ENCODE measurements at regions of chr7 and their contacts with region 1.

Region 1: DNA sequence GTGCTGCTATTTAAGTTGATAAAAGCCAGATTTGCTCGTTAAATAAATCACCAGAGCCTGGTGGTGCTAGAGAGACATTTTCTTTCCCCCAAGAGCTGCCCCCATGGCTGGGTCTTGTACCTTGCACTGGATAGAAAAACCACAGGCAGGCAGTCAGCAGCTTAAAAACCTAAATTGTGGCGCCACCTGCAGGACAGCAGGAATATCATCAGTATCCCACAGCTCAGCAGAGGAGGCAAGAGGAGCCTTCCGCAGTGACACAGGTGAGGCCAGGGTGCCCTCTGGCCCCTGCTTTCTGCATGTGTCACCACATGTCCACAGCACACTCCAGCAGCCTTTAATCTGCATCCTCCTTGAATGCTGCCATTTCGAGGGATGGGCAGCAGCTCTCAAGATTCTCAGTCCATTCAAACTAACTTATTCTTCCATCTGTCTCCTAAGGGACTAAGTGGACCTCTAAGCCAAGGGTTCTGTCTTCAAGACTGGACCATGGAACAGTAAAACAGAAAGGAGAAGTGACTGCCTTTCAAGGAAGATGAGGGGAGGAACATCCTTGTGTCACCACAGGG is 4.5 kb upstream of the PLXNA4 start:
- DNase-seq: no peak
- H3K4me3 ChIP-seq: no peak overlapping the region
- H3K27ac ChIP-seq: no peak overlapping the region
- H3K4me1 ChIP-seq: peaks cover 6 to 18% (median 14%) of the 10 kb centered on the region in 6 donors
- H3K27me3 ChIP-seq: peaks cover 0 to 58% (median 21%) of the 10 kb centered on the region in 7 donors
- CTCF ChIP-seq: peak; percentile 54 to 84 (median 69)
- POLR2A ChIP-seq: no peak

Region 2: DNA sequence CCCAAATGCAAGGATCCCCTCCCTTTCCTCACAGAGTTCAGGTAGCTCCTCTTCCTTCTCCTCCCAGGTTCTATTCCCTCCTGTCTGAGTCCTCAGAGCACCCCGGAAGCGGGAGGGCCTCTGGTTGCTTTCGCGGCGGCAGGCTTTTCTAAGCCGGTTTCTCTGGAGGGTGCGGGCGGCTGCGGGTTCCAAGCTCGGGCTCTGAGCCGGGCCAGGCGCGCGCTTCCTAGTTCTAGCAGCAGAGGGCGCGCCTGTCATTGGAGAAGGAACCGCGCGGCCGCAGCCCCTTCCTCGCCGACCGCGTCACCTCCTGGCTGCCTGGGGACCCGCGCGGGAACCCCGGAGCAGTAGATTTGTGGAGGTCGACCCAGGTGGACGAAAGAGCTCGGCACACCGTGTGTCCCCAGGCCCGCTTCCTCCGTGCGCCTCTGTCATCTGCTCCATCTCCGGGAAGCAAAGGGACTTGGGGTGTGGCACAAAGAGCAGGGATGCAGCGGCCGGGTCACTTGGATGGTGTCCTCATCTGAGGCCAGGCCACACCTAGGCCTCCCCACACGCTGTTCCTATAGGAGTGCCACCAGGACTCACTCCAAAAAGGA is 635.4 kb before region 1 on chr7:
- intact Hi-C with region 1: loop called (anchors 10 kb)
- DNase-seq: no peak
- H3K4me3 ChIP-seq: peak overlapping the region in 1 of 8 donors; percentile 26
- H3K27ac ChIP-seq: no peak overlapping the region
- H3K4me1 ChIP-seq: peaks cover 0 to 42% (median 20%) of the 10 kb centered on the region in 6 donors
- H3K27me3 ChIP-seq: peaks cover 0 to 64% (median 9%) of the 10 kb centered on the region in 7 donors
- CTCF ChIP-seq: peak in 10 of 11 experiments; percentile 23 to 83 (median 68)
- POLR2A ChIP-seq: no peak

Region 3: GRCh38 chr7:132318352-132319318 is 262.2 kb before region 1 on chr7:
- intact Hi-C with region 1: loop called (anchors 5 kb)
- DNase-seq: peak; percentile 93
- H3K4me3 ChIP-seq: peak overlapping the region in 1 of 8 donors; percentile 21
- H3K27ac ChIP-seq: no peak overlapping the region
- H3K4me1 ChIP-seq: peaks cover 4 to 19% (median 16%) of the 10 kb centered on the region in 6 donors
- H3K27me3 ChIP-seq: peaks cover 0 to 43% (median 0%) of the 10 kb centered on the region in 7 donors
- CTCF ChIP-seq: peak; percentile 74 to 86 (median 82)
- POLR2A ChIP-seq: no peak

Region 4: DNA sequence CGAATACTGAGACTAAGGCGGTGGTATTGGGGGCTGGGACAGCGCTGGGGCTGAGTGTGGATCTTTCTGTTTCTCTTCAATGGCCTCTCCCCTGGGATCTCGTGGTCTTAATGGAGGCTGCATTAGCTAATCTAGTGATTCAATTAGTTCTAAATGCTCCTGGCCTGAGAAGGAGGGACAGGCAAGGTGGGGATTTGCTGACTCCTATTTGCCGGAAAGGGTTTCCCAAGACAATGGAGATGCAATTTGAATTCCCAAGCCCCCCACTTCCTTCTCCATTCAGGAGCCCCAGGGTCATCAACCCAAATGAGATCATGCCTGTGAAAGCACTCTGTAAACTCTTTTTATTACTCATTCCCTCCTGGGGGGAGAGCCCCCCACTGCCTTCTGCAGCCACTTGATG is 107.2 kb after region 1 on chr7:
- intact Hi-C with region 1: no loop called
- DNase-seq: no peak
- H3K4me3 ChIP-seq: no peak overlapping the region
- H3K27ac ChIP-seq: no peak overlapping the region
- H3K4me1 ChIP-seq: no peaks in the 10 kb centered on the region
- H3K27me3 ChIP-seq: peaks cover 0 to 7% (median 0%) of the 10 kb centered on the region in 7 donors
- CTCF ChIP-seq: no peak
- POLR2A ChIP-seq: no peak

Region 5: DNA sequence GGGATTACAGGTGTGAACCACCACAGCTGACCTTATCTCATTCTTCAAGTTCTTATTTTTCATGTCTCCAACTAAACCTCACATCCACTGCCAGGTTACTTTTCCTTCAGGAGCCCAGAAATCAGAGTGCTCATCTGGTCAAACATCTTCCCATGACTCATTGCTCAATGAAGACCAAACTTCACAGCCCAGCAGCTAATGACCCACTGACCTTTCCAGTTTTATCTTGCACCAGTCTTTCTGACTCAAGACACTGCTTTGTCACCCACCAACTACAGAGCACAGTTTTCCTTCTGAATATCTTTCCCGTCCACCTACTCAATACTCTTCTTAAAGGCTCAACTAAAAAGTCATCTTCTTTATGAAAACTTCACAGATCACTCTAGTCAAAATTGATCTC is 255.9 kb after region 1 on chr7:
- intact Hi-C with region 1: no loop called
- DNase-seq: no peak
- H3K4me3 ChIP-seq: no peak overlapping the region
- H3K27ac ChIP-seq: no peak overlapping the region
- H3K4me1 ChIP-seq: no peaks in the 10 kb centered on the region
- H3K27me3 ChIP-seq: no peaks in the 10 kb centered on the region
- CTCF ChIP-seq: no peak
- POLR2A ChIP-seq: no peak